ENCODE measurements at regions of chr7 and their contacts with region 1.

Region 1: GRCh38 chr7:34596892-34597291 is 61.1 kb upstream of the NPSR1 start:
- DNase-seq: no peak
- ATAC-seq: no peak
- H3K4me3 ChIP-seq: no peak overlapping the region
- H3K4me3 Mint-ChIP-seq: no peak overlapping the region
- H3K27ac ChIP-seq: no peak overlapping the region
- H3K27ac Mint-ChIP-seq: no peak overlapping the region
- H3K4me1 ChIP-seq: no peaks in the 10 kb centered on the region
- H3K4me1 Mint-ChIP-seq: no peaks in the 10 kb centered on the region
- H3K27me3 ChIP-seq: no peaks in the 10 kb centered on the region
- H3K27me3 Mint-ChIP-seq: no peaks in the 10 kb centered on the region

Region 2: GRCh38 chr7:34471844-34472243 is 125.0 kb before region 1 on chr7:
- CTCF ChIA-PET with region 1: no interaction called
- POLR2A ChIA-PET with region 1: no interaction called
- intact Hi-C with region 1: no loop called
- DNase-seq: no peak
- ATAC-seq: no peak
- H3K4me3 ChIP-seq: no peak overlapping the region
- H3K4me3 Mint-ChIP-seq: no peak overlapping the region
- H3K27ac ChIP-seq: no peak overlapping the region
- H3K27ac Mint-ChIP-seq: no peak overlapping the region
- H3K4me1 ChIP-seq: no peaks in the 10 kb centered on the region
- H3K4me1 Mint-ChIP-seq: no peaks in the 10 kb centered on the region
- H3K27me3 ChIP-seq: no peaks in the 10 kb centered on the region
- H3K27me3 Mint-ChIP-seq: no peaks in the 10 kb centered on the region

Region 3: DNA sequence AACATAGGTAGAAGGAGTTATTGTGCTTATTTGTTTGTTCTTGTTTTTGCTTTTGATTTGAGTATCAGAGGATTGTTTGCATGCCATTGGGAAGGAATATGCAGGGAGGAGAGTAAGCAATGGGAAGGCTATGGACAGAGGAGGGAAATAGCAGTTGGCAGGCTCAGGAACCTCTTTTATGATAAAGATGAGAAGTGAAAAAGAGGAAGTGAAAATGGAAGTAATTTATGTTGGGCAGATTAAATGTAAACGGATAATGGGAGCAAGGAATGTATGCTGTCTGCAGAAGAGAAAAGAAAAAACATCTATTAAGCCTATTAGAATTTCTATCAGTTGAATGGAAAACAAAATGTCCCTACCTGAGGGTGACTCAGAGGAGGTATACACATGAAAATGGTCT is 29.0 kb before region 1 on chr7:
- CTCF ChIA-PET with region 1: no interaction called
- POLR2A ChIA-PET with region 1: no interaction called
- intact Hi-C with region 1: loop called in 1 of 2 experiments (anchors 2 kb)
- DNase-seq: no peak
- ATAC-seq: no peak
- H3K4me3 ChIP-seq: no peak overlapping the region
- H3K4me3 Mint-ChIP-seq: no peak overlapping the region
- H3K27ac ChIP-seq: no peak overlapping the region
- H3K27ac Mint-ChIP-seq: no peak overlapping the region
- H3K4me1 ChIP-seq: no peaks in the 10 kb centered on the region
- H3K4me1 Mint-ChIP-seq: peaks cover 0 to 1% (median 0%) of the 10 kb centered on the region in 7 donors
- H3K27me3 ChIP-seq: no peaks in the 10 kb centered on the region
- H3K27me3 Mint-ChIP-seq: no peaks in the 10 kb centered on the region